AG04450 (cell line): ENCODE measurements at regions of chr3 and their contacts with region 1.

Region 1: GRCh38 chr3:147945968-147946519 is 536.9 kb downstream of the ZIC1 start:
- DNase-seq: peak; percentile 88
- H3K4me3 ChIP-seq: peak overlapping the region; percentile 43
- H3K27ac ChIP-seq: peak overlapping the region; percentile 59
- H3K27me3 ChIP-seq: no peaks in the 10 kb centered on the region
- CTCF ChIP-seq: peak; percentile 90

Region 2: GRCh38 chr3:147680837-147681483 is 265.1 kb before region 1 on chr3:
- CTCF ChIA-PET with region 1: no interaction called
- POLR2A ChIA-PET with region 1: no interaction called
- DNase-seq: no peak
- H3K4me3 ChIP-seq: no peak overlapping the region
- H3K27ac ChIP-seq: no peak overlapping the region
- H3K27me3 ChIP-seq: no peaks in the 10 kb centered on the region
- CTCF ChIP-seq: no peak

Region 3: DNA sequence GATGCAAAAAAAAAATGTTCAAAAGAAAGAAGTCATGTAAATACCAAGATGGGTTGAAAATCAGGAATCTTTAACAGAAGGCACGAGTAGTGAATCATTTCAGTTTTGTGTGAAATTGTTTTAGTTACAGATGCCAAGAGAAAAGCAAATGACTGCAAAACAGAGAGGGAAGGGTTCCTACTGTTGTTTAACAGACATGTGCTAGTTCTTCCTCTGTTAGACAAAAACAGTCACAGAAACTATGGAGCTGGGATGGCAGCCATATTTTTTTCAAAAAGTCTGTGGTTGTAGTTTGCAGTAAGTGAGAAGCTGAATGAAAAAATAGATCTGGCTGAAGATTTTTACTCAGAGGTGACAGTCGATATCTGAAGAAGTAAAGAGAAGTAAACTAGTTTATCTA is 25.0 kb before region 1 on chr3:
- CTCF ChIA-PET with region 1: interaction called, 38 read pairs
- POLR2A ChIA-PET with region 1: no interaction called
- DNase-seq: peak; percentile 26
- H3K4me3 ChIP-seq: no peak overlapping the region
- H3K27ac ChIP-seq: no peak overlapping the region
- H3K27me3 ChIP-seq: no peaks in the 10 kb centered on the region
- CTCF ChIP-seq: no peak

Region 4: DNA sequence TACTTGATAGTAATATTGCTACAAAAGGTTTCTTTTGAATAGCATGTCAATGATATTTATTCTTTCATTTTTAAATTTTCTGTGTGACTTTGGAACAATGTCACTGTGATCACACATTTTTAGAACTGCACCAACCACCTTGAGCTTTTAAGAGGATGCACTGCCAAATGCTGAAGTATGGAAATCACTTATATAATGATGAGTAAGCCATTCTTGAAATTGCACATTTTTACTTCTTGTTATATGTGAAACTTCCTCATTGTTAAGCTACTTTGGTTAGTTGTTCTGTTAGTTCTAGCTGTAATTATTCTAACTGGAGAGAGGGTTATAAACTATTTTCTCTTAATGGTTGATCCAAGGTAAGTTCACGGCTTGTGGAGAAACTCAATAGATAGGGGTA is 10.6 kb after region 1 on chr3:
- CTCF ChIA-PET with region 1: interaction called, 12 read pairs
- POLR2A ChIA-PET with region 1: no interaction called
- DNase-seq: no peak
- H3K4me3 ChIP-seq: no peak overlapping the region
- H3K27ac ChIP-seq: no peak overlapping the region
- H3K27me3 ChIP-seq: no peaks in the 10 kb centered on the region
- CTCF ChIP-seq: no peak